Right ventricle myocardium inferior (tissue), 1 donor: ENCODE measurements at regions of chr5 and their contacts with region 1.

Region 1: DNA sequence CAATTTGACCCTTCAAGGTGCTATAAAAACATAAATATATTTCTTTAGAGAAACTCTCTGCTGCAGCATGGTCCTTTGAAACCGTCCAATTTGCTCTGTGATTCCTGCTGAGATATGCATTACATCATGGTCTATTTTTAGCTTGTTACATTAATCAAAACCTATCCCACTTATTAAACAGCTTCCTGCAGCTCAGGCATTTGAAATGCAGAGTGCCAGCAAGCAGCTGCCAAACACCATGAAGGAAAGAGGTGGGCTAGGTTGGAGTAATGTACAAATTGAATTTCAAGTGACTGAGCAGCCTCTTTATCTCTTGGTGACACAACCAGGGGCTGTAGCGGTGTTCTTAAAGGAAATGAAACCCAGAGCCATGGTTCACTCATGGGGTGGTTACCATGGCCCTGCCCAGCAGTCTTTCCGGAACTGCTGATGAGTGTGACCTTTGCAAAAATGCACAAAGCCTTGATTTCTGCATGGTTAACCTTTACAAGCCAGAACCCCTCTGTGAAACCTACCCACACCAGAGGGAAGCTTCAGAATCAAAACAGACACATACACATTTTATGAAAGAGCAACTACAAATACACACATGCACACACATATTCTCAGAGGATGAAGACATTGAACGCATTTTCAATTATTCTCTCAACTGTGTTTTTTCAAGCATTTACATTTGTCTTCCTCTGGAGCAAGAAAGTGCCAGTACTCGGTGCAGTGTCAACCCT is 155.8 kb upstream of the ZNF608 start:
- DNase-seq: no peak
- ATAC-seq: no peak

Region 2: GRCh38 chr5:124176691-124177090 is 725.6 kb before region 1 on chr5:
- intact Hi-C with region 1: loop called (anchors 10 kb)
- DNase-seq: no peak
- ATAC-seq: peak; percentile 96

Region 3: GRCh38 chr5:124655922-124656511 is 246.2 kb before region 1 on chr5:
- intact Hi-C with region 1: loop called (anchors 5 kb)
- DNase-seq: no peak
- ATAC-seq: peak; percentile 63

Region 4: GRCh38 chr5:124871303-124871702 is 31.0 kb before region 1 on chr5:
- intact Hi-C with region 1: no loop called
- DNase-seq: no peak
- ATAC-seq: no peak

Region 5: DNA sequence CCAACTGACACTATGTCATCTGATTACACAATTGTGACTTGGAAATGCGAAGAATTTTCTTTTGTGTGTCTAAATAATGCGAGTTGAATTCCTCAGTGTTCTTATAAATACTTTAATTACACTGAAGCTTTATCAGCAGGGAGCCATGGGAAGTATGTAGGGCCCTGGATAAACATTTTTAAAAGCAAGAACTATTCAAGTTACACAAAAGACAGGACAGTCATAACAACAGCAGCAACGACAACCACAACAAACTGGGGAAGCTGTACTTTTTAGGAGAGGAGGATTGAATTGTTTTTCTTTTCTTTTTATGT is 94.5 kb after region 1 on chr5:
- intact Hi-C with region 1: no loop called
- DNase-seq: no peak
- ATAC-seq: no peak

Region 6: DNA sequence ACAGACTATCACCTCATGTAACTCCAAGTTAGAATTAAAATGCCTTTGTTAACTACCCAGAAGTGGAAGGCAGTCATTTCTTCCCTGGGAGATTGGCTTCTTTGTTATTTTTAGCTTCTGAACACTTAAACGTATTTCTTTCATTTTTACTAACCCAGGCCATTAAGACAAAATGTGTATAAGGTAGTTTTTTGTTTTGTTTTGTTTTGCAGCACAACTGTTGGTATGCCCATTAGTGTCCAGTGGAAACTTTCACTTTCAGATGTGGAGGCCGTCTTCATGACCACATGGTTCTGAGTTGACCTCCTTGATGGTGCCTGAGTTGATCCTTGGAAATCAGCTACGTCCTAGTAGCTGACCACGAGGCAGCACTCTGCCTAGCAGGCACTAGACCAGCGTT is 108.8 kb after region 1 on chr5:
- intact Hi-C with region 1: loop called (anchors 5 kb)
- DNase-seq: no peak
- ATAC-seq: no peak

Region 7: GRCh38 chr5:125198270-125198974 is 296.2 kb after region 1 on chr5:
- intact Hi-C with region 1: loop called (anchors 5 kb)
- DNase-seq: peak; percentile 73
- ATAC-seq: peak; percentile 64